ENCODE measurements at regions of chr12 and their contacts with region 1.

Region 1: DNA sequence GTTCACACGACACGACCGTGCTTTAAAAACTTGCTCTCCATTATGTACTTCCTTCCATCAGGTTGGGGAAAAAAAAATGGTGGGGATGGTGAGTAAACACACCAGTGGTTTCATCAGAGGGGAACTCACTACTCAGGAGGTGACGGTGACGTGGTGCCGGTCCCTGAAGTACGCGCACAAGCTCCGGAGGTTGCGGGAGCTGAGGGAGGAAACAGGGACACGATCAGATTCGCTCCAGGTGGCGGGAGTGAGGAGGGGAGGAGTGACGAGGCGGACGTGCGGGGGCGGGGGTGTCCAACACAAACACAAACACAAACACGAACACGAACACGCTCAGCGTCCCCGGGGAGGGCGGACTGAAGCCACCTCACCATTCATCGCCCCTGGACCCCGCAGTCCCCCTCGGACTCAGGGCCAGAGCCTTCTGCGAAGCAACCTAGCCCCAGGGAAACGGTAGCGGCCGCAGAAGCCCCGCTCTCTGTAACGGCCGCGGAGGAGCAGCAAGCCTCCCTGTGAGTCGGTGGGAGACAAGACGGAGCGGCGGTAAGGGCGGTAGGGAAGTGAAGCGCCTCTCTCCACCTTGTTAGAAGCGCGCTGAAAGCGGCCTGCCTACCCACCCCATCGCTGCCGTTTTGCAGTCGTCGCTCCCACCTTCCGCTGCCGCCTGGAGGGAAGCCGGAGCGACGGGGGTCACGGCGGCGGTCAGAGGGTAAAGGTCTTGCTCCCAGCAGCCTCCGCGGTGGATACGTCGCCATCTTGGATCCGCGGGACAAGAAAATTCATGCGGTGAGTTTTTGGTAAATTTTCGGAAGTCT is at the start of gene CNOT2:
- DNase-seq: peak; percentile 82
- ATAC-seq: peak; percentile 73
- H3K4me3 ChIP-seq: peak within 1 kb of the TSS; percentile 82
- H3K27ac ChIP-seq: peak within 1 kb of the TSS; percentile 88
- H3K4me1 ChIP-seq: peaks cover 34% of the 10 kb centered on the region
- H3K27me3 ChIP-seq: no peaks in the 10 kb centered on the region
- CTCF ChIP-seq: no peak
- total RNA-seq, gene CNOT2: 60.4 and 73.7 TPM in 2 replicates

Region 2: DNA sequence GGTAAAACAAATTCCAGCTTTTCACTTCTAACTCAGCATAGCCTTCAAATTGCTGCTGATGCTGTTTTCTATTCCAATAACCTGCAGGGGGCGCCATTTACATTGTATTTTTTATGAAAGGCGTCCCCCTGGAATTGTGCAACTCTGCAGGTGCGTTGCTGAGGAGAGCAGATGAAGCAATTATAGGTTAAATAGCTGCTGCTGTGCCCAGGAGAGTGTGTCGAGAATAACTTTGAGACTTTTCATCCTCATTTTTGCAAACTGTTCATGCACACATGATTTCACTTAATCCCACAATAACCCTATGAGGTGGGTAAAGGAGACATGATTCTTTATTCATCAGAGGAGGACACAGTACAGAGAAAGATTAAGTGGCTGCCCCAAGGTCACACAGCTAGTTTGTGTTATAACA is 342.2 kb before region 1 on chr12:
- CTCF ChIA-PET with region 1: no interaction called
- POLR2A ChIA-PET with region 1: no interaction called
- intact Hi-C with region 1: loop called (anchors 2 kb)
- DNase-seq: peak; percentile 86
- ATAC-seq: peak; percentile 69
- H3K4me3 ChIP-seq: no peak overlapping the region
- H3K27ac ChIP-seq: no peak overlapping the region
- H3K4me1 ChIP-seq: no peaks in the 10 kb centered on the region
- H3K27me3 ChIP-seq: no peaks in the 10 kb centered on the region
- CTCF ChIP-seq: peak; percentile 92

Region 3: GRCh38 chr12:69985656-69986055 is 257.2 kb before region 1 on chr12:
- CTCF ChIA-PET with region 1: no interaction called
- POLR2A ChIA-PET with region 1: interaction called, 11 read pairs
- intact Hi-C with region 1: loop called (anchors 2 kb)
- DNase-seq: peak; percentile 56
- ATAC-seq: peak; percentile 16; the same call in 1 of the 2 replicates
- H3K4me3 ChIP-seq: no peak overlapping the region
- H3K27ac ChIP-seq: no peak overlapping the region
- H3K4me1 ChIP-seq: peaks cover 27% of the 10 kb centered on the region
- H3K27me3 ChIP-seq: no peaks in the 10 kb centered on the region
- CTCF ChIP-seq: peak; percentile 61

Region 4: GRCh38 chr12:70196811-70197281 is 46.1 kb before region 1 on chr12:
- CTCF ChIA-PET with region 1: no interaction called
- POLR2A ChIA-PET with region 1: no interaction called
- intact Hi-C with region 1: no loop called
- DNase-seq: no peak
- ATAC-seq: no peak
- H3K4me3 ChIP-seq: no peak overlapping the region
- H3K27ac ChIP-seq: no peak overlapping the region
- H3K4me1 ChIP-seq: no peaks in the 10 kb centered on the region
- H3K27me3 ChIP-seq: no peaks in the 10 kb centered on the region
- CTCF ChIP-seq: no peak

Region 5: DNA sequence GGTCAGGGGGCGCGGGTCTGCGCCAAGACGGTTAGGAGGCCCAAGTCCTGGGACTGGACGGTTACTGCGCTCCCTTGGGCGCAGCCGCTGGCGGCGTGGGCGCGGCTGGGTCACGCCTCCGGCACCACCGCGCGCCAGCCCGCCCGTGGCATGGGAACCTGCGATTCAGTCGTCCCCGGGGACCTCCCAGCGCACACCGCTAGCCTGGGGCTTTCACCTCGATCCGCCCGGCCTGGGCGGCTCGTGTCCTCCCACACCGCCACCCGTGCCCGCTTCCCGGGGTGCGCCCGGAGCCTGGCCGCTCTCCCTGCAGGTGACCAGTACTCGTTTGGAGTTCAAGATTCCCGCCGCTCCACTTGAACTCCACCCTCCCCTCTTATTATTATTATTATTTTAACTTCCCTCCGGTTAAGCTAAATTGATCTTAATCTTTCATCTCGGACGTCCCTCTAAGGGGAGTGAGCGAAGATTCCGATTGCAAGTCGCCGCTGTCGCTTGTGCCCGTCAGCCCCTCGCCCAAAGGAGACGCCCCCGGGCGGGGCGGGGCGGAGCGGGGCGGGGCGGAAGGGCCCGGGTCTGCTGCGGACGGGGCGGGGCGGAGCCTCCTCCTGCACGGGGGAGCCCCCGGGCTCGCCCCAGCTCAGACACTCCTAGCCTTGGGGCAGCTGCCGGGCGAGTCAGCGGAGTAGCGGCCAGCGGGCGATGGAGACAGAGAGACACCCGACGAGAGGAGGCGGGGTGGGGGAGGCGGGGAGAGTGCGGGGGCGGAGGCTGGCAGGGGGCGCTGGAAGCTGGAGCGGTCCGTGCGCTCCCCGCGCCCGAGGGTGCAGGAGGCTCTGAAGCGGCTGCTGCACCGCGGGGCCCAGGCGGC is 123.0 kb after region 1 on chr12 and contains the start of gene KCNMB4:
- CTCF ChIA-PET with region 1: no interaction called
- POLR2A ChIA-PET with region 1: no interaction called
- intact Hi-C with region 1: loop called (anchors 5 kb)
- DNase-seq: peak; percentile 74
- ATAC-seq: peak; percentile 76
- H3K4me3 ChIP-seq: peak within 1 kb of the TSS; percentile 79
- H3K27ac ChIP-seq: no peak within 1 kb of the TSS
- H3K4me1 ChIP-seq: peaks cover 20% of the 10 kb centered on the region
- H3K27me3 ChIP-seq: no peaks in the 10 kb centered on the region
- CTCF ChIP-seq: no peak
- total RNA-seq, gene KCNMB4: 2.6 and 3.0 TPM in 2 replicates

Region 6: GRCh38 chr12:70543444-70543843 is 300.5 kb after region 1 on chr12:
- CTCF ChIA-PET with region 1: no interaction called
- POLR2A ChIA-PET with region 1: no interaction called
- intact Hi-C with region 1: loop called (anchors 10 kb)
- DNase-seq: peak; percentile 93
- ATAC-seq: peak; percentile 98
- H3K4me3 ChIP-seq: no peak overlapping the region
- H3K27ac ChIP-seq: peak overlapping the region; percentile 23; the same call in 1 of the 2 replicates
- H3K4me1 ChIP-seq: peaks cover 16% of the 10 kb centered on the region
- H3K27me3 ChIP-seq: no peaks in the 10 kb centered on the region
- CTCF ChIP-seq: no peak

Measured in PC-3 (cell line).